T-cell (primary cell): ENCODE measurements at regions of chr1 and their contacts with region 1.

Region 1: GRCh38 chr1:66954208-66954607 is 29.4 kb downstream of the MIER1 start:
- DNase-seq: no peak
- ATAC-seq: no peak
- H3K4me3 ChIP-seq: no peak overlapping the region
- H3K4me3 Mint-ChIP-seq: no peak overlapping the region
- H3K27ac ChIP-seq: no peak overlapping the region
- H3K27ac Mint-ChIP-seq: peak overlapping the region; percentile 58 to 61
- H3K4me1 ChIP-seq: no peaks in the 10 kb centered on the region
- H3K4me1 Mint-ChIP-seq: peaks cover 57 to 71% (median 65%) of the 10 kb centered on the region in 3 donors
- H3K27me3 ChIP-seq: no peaks in the 10 kb centered on the region
- H3K27me3 Mint-ChIP-seq: no peaks in the 10 kb centered on the region

Region 2: GRCh38 chr1:66500301-66500700 is 453.9 kb before region 1 on chr1:
- CTCF ChIA-PET with region 1: no interaction called
- POLR2A ChIA-PET with region 1: interaction called in 1 of 2 experiments, 10 read pairs
- DNase-seq: no peak
- ATAC-seq: no peak
- H3K4me3 ChIP-seq: no peak overlapping the region
- H3K4me3 Mint-ChIP-seq: no peak overlapping the region
- H3K27ac ChIP-seq: no peak overlapping the region
- H3K27ac Mint-ChIP-seq: no peak overlapping the region
- H3K4me1 ChIP-seq: no peaks in the 10 kb centered on the region
- H3K4me1 Mint-ChIP-seq: no peaks in the 10 kb centered on the region
- H3K27me3 ChIP-seq: peaks cover 0 to under 1% of the 10 kb centered on the region in 2 experiments
- H3K27me3 Mint-ChIP-seq: peaks cover 6 to 32% of the 10 kb centered on the region in 2 donors

Region 3: GRCh38 chr1:66968574-66968973 is 14.4 kb after region 1 on chr1:
- CTCF ChIA-PET with region 1: interaction called in 1 of 2 experiments, 3 read pairs
- POLR2A ChIA-PET with region 1: interaction called in 1 of 2 experiments, 11 read pairs
- DNase-seq: no peak
- ATAC-seq: no peak
- H3K4me3 ChIP-seq: no peak overlapping the region
- H3K4me3 Mint-ChIP-seq: no peak overlapping the region
- H3K27ac ChIP-seq: no peak overlapping the region
- H3K27ac Mint-ChIP-seq: peak overlapping the region in 1 of 2 donors; percentile 69
- H3K4me1 ChIP-seq: no peaks in the 10 kb centered on the region
- H3K4me1 Mint-ChIP-seq: peaks cover 29 to 39% (median 32%) of the 10 kb centered on the region in 3 donors
- H3K27me3 ChIP-seq: no peaks in the 10 kb centered on the region
- H3K27me3 Mint-ChIP-seq: no peaks in the 10 kb centered on the region